A549 (cell line): ENCODE measurements at regions of chr5 and their contacts with region 1.

Region 1: DNA sequence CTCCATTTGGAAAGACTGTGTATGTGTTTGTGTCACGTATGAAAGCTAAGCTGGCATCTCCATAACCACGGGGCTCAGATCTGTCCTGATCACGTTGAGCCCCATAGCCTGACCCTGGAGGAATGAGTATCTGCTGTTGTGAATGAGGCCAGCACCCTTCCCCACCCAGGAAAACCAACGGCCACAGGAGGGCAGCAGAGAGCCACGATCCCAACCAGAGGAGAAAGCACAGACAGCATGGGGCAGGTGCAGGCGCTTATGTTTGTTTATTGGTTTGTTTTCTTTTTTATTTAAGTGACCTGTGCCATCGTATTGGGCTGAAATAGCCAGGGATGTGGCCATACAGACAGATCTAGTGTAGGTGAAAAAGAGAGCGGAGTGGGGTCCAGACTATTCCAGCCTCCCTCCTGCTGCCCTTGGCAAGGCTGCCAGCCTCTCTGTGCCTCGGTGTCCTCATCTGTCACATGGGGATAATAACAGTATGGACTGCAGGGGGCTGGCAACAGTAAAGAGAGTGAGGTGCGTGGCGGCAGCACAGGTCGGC is 12.0 kb downstream of the OR2V2 start:
- DNase-seq: peak; percentile 87 to 91
- ATAC-seq: peak; percentile 78 to 90
- H3K4me3 ChIP-seq: no peak overlapping the region
- H3K27ac ChIP-seq: peak overlapping the region; percentile 90 to 99
- H3K4me1 ChIP-seq: peaks cover 22% of the 10 kb centered on the region
- CTCF ChIP-seq: peak; percentile 91
- EP300 ChIP-seq: no peak
- POLR2A ChIP-seq: no peak
- RAD21 ChIP-seq: peak; percentile 90 to 91

Region 2: DNA sequence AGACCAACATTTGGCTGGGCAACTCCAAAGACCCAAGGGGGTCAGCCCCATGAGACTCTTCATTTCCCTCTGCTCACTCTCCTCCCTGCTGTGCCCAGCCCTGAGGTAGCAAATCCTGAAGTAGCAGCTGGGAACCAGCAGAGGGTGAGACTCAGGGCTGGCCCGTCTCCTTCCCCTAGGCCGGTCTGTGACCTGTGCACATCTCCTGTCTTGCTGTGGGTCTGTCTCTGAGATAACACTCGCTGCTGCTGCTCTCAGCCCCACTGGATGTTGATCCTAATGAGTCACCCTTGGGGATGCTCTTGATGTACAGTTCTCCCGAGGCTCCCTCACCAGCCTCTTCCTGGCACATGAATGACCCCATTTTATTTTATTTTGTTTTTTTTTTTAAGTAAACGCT is 21.1 kb before region 1 on chr5:
- CTCF ChIA-PET with region 1: interaction called, 15 read pairs
- POLR2A ChIA-PET with region 1: no interaction called
- DNase-seq: peak in 1 of 2 experiments; percentile 52
- ATAC-seq: peak; percentile 51 to 78; a peak in 4 of 6 replicates
- H3K4me3 ChIP-seq: no peak overlapping the region
- H3K27ac ChIP-seq: peak overlapping the region in 1 of 2 experiments; percentile 12; a peak in 1 of 6 replicates
- H3K4me1 ChIP-seq: peaks cover 18% of the 10 kb centered on the region
- CTCF ChIP-seq: no peak
- EP300 ChIP-seq: no peak
- POLR2A ChIP-seq: no peak
- RAD21 ChIP-seq: no peak

Region 3: GRCh38 chr5:181173420-181174342 is 14.3 kb after region 1 on chr5:
- CTCF ChIA-PET with region 1: interaction called, 15 read pairs
- POLR2A ChIA-PET with region 1: no interaction called
- DNase-seq: peak; percentile 84 to 99
- ATAC-seq: peak; percentile 84 to 87
- H3K4me3 ChIP-seq: peak overlapping the region; percentile 50
- H3K27ac ChIP-seq: peak overlapping the region; percentile 76 to 87
- H3K4me1 ChIP-seq: peaks cover 21% of the 10 kb centered on the region
- CTCF ChIP-seq: peak; percentile 5; the same call in 1 of the 3 replicates
- EP300 ChIP-seq: no peak
- POLR2A ChIP-seq: no peak
- RAD21 ChIP-seq: 0 out of 5 replicates have a peak, but pooled peaks of 1 of the 2 experiments have one; percentile 1